ENCODE measurements at regions of chr18 and their contacts with region 1.

Region 1: DNA sequence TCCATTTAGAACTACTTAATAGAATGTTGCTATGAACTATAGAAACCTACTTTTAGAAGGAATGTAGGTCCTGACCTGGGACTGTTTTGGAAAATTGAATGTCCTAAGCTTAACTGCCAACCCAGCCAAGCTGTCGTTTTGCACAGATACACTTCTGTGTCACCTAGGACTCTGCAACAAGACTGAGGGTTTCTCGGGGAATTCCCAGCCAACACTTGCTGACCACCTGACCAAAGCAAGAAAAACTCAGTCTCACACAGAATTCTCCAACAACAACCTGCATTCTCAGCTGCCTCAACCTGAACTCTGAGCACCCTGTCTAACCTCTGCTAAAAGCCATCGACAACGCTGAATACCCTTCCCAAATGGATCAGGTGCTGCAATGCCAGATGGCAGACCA is 128.2 kb downstream of the SS18 start:
- DNase-seq: no peak

Region 2: GRCh38 chr18:25883091-25883490 is 79.1 kb before region 1 on chr18:
- intact Hi-C with region 1: no loop called
- DNase-seq: no peak

Region 3: GRCh38 chr18:25896178-25896780 is 65.9 kb before region 1 on chr18:
- intact Hi-C with region 1: no loop called
- DNase-seq: no peak

Region 4: DNA sequence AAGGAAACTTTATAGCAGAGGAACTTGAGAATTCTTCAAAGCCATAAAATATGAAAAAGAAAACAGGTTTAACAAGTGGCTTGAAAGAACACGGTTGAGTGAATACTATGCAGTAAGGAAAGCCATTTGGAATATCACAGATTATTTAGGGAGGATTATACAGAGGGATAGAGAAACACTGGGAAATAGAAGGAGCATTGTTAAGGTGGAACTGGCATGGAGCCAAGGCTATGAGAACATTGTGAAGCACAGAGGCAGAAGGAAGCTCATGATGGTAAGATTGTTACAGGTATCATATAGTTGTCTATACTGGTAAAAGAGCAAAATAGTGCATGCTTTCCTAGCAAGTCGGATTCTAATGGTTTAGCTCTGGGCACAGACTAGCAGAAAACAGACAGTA is 41.2 kb after region 1 on chr18:
- intact Hi-C with region 1: loop called in 1 of 2 experiments (anchors 2 kb)
- DNase-seq: no peak

Region 5: GRCh38 chr18:26757263-26758019 is 795.3 kb after region 1 on chr18:
- intact Hi-C with region 1: no loop called
- DNase-seq: no peak

Region 6: DNA sequence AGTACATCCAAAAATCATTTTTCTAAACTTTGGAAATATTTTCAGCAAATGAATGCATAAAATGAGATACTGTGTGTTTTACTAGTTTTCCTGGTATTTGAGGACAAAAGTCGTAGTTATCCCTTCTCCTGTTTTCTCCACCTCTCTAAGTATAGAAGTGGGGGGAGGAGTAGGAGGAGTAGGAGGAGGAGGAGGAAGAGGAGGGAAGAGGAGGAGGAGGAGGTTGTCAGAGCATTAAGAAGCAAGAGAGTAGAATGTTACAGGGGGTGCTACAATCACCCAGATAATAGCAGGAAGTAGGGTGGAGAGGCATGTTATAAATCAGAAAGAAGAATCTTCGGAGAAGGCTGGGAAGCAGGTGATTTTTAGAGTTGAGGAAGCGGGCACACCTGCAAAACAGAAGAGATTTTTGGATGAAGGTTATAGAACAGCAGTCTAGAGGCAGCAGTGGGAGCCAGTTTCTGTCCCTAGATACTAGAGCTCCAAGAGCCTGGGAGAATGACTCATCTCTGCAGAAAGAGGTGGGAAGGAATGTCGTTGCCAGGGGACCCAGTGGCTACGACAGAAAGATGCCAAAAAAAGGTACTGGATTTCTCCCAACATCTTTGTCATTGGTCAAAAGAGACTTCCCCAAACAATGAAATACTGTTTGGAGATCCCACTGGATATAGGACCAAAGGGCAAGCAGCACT is 947.6 kb after region 1 on chr18:
- intact Hi-C with region 1: no loop called
- DNase-seq: no peak

Measured in posterior vena cava (tissue), 2 donors.